ENCODE measurements at regions of chr11 and their contacts with region 1.

Region 1: GRCh38 chr11:58524232-58525036 is 16.5 kb upstream of the OR5B21 start:
- H3K4me3 ChIP-seq: no peak overlapping the region
- H3K27ac ChIP-seq: no peak overlapping the region
- H3K4me1 ChIP-seq: no peaks in the 10 kb centered on the region
- CTCF ChIP-seq: no peak; the same call in 1 of the 2 replicates

Region 2: GRCh38 chr11:58268137-58268536 is 256.3 kb before region 1 on chr11 and contains the start of gene OR10W1:
- CTCF ChIA-PET with region 1: no interaction called
- POLR2A ChIA-PET with region 1: no interaction called
- H3K4me3 ChIP-seq: no peak within 1 kb of the TSS
- H3K27ac ChIP-seq: no peak within 1 kb of the TSS
- H3K4me1 ChIP-seq: no peaks in the 10 kb centered on the region
- CTCF ChIP-seq: no peak

Region 3: DNA sequence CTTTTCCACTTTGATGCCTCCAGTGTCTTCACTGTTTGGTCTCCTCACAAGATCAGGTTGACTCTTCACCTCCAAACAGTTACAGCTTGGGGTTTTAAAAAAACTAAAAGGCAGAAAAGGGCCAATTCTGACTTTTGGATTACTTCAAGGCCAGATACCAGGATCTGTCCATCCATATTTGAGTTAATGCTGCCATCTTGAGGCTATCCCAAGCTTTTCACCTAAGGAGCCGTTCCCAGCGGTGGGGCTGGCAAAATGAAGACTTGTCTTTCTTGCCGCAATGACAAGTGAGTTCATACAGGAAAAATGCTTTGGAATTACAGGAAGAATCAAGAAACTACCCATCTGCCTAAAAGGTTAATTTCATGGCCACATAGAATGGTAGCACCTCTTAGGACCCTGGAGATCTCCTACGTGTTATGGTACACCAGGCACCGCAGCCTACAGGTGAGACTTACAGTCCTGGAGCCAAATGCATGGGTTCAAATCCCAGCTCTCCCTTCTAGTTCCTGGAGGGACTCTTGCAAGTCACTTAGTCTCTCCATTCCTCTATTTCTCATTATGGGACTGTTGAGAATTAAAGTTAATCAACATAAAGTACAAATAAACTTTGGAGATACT is 10.6 kb before region 1 on chr11:
- CTCF ChIA-PET with region 1: interaction called, 43 read pairs
- POLR2A ChIA-PET with region 1: no interaction called
- H3K4me3 ChIP-seq: no peak overlapping the region
- H3K27ac ChIP-seq: no peak overlapping the region
- H3K4me1 ChIP-seq: no peaks in the 10 kb centered on the region
- CTCF ChIP-seq: no peak

Region 4: GRCh38 chr11:58592760-58593472 is 68.5 kb after region 1 on chr11:
- CTCF ChIA-PET with region 1: no interaction called
- POLR2A ChIA-PET with region 1: no interaction called
- H3K4me3 ChIP-seq: no peak overlapping the region
- H3K27ac ChIP-seq: no peak overlapping the region
- H3K4me1 ChIP-seq: peaks cover 6% of the 10 kb centered on the region; the same call in 1 of the 2 replicates
- CTCF ChIP-seq: no peak

Region 5: DNA sequence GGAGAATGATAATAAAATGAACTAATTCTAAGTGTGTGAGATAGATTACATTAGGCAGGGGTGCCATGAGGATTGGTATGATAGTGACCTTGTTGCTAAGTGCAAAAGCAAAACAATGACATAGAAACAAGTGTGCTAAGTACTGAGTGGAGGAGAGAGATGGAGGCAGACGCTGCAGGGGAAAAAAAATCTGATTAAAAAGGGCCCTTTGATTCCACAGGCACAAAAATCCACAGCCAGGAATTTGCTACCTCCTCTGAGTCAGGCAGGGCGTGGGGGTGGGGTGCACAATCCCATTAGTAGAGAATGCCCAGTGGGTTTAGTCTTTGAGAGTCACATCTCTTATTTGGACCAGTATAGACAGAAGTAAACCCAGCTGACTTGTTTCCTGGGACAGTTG is 97.9 kb after region 1 on chr11 and contains the start of gene CNTF:
- CTCF ChIA-PET with region 1: no interaction called
- POLR2A ChIA-PET with region 1: no interaction called
- H3K4me3 ChIP-seq: no peak within 1 kb of the TSS
- H3K27ac ChIP-seq: no peak within 1 kb of the TSS
- H3K4me1 ChIP-seq: no peaks in the 10 kb centered on the region
- CTCF ChIP-seq: no peak